PC-9 (cell line): ENCODE measurements at regions of chr10 and their contacts with region 1.

Region 1: GRCh38 chr10:12287772-12288171 is 61.6 kb upstream of the CAMK1D start:
- DNase-seq: no peak
- H3K4me3 ChIP-seq: no peak overlapping the region
- H3K27ac ChIP-seq: no peak overlapping the region
- H3K4me1 ChIP-seq: no peaks in the 10 kb centered on the region
- H3K27me3 ChIP-seq: no peaks in the 10 kb centered on the region
- CTCF ChIP-seq: no peak

Region 2: GRCh38 chr10:12158111-12158510 is 129.7 kb before region 1 on chr10:
- CTCF ChIA-PET with region 1: no interaction called
- POLR2A ChIA-PET with region 1: no interaction called
- intact Hi-C with region 1: no loop called
- DNase-seq: no peak
- H3K4me3 ChIP-seq: no peak overlapping the region
- H3K27ac ChIP-seq: no peak overlapping the region
- H3K4me1 ChIP-seq: no peaks in the 10 kb centered on the region
- H3K27me3 ChIP-seq: no peaks in the 10 kb centered on the region
- CTCF ChIP-seq: no peak

Region 3: DNA sequence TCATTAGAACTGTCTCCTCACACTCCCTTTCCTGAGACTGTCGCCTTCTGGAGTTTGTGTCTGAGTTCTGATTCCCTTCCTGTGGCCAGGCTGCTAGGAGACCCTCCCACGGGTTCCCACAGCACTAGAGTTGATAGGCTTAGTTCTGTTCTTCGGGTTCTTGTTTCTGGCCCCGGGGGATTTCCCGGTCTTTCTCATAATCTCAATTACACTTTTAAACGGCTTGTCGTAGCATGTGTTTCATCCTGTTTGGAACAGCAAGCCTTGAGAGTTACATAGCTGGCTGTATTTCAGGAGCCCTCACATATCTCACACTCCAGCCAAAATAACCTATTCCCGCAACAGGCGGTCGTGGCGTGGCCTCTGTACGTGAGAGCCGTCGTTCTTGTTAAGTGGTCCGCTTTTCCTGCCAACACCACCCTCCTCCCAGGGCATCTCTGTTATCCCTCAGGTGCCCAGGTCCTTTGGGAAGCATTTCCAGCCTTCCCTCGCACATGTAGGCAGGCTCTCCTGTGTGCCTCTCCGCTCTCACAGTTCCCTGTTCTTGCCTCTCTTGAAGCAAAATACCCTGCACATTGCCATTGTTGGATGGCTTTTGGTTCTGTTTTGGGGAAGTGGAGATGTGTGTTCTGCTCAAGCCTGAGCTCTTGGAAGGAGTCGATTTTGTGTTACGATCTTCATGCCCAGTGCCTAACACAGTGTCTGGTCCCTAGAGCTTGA is 45.8 kb before region 1 on chr10:
- CTCF ChIA-PET with region 1: no interaction called
- POLR2A ChIA-PET with region 1: no interaction called
- intact Hi-C with region 1: no loop called
- DNase-seq: no peak
- H3K4me3 ChIP-seq: no peak overlapping the region
- H3K27ac ChIP-seq: no peak overlapping the region
- H3K4me1 ChIP-seq: no peaks in the 10 kb centered on the region
- H3K27me3 ChIP-seq: no peaks in the 10 kb centered on the region
- CTCF ChIP-seq: no peak

Region 4: DNA sequence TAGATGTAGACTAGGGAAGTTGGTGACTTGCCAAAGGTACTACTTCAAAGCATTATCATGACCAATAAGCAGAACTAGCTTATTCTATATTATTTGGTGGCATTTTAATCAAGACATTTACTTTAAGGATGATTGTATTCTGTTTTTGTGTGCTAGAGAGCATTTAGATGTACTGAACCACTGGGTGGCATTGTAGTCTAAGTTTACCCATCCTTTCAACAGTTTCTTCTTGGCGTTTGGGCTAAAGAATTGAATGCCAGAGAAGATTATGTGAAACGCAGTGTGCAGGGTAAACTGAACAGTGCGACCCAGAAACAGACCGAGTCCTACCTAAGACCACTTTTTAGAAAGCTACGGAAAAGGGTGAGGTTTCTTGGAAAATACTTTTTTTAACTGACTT is 1325.7 kb after region 1 on chr10:
- CTCF ChIA-PET with region 1: no interaction called
- POLR2A ChIA-PET with region 1: interaction called, 10 read pairs
- intact Hi-C with region 1: no loop called
- DNase-seq: no peak
- H3K4me3 ChIP-seq: no peak overlapping the region
- H3K27ac ChIP-seq: no peak overlapping the region
- H3K4me1 ChIP-seq: peaks cover 17% of the 10 kb centered on the region
- H3K27me3 ChIP-seq: no peaks in the 10 kb centered on the region
- CTCF ChIP-seq: peak; percentile 64